GM10248 (cell line): ENCODE measurements at regions of chr3 and their contacts with region 1.

Region 1: GRCh38 chr3:115960799-115961198 is 337.5 kb downstream of the GAP43 start:
- DNase-seq: peak; percentile 23
- CTCF ChIP-seq: no peak

Region 2: GRCh38 chr3:115943579-115943978 is 17.2 kb before region 1 on chr3:
- CTCF ChIA-PET with region 1: interaction called, 10 read pairs
- POLR2A ChIA-PET with region 1: no interaction called
- DNase-seq: no peak
- CTCF ChIP-seq: no peak

Region 3: GRCh38 chr3:115975353-115975752 is 14.6 kb after region 1 on chr3:
- CTCF ChIA-PET with region 1: interaction called, 11 read pairs
- POLR2A ChIA-PET with region 1: no interaction called
- DNase-seq: peak; percentile 14
- CTCF ChIP-seq: no peak